H1 (cell line): ENCODE measurements at regions of chr3 and their contacts with region 1.

Region 1: GRCh38 chr3:36993326-36994283 is at the start of gene MLH1:
- DNase-seq: peak; percentile 53 to 95
- H3K4me3 ChIP-seq: peak within 1 kb of the TSS; percentile 58 to 93 (median 90)
- H3K27ac ChIP-seq: peak within 1 kb of the TSS; percentile 96
- H3K4me1 ChIP-seq: peaks cover 0 to 2% (median 0%) of the 10 kb centered on the region in 4 experiments; a peak in 3 of 7 replicates
- H3K27me3 ChIP-seq: no peaks in the 10 kb centered on the region
- CTCF ChIP-seq: no peak
- EP300 ChIP-seq: no peak
- POLR2A ChIP-seq: peak in 1 of 2 experiments; percentile 32; a peak in 2 of 3 replicates
- RAD21 ChIP-seq: no peak
- total RNA-seq, gene MLH1: 47.3 and 51.1 TPM in 2 replicates

Region 2: DNA sequence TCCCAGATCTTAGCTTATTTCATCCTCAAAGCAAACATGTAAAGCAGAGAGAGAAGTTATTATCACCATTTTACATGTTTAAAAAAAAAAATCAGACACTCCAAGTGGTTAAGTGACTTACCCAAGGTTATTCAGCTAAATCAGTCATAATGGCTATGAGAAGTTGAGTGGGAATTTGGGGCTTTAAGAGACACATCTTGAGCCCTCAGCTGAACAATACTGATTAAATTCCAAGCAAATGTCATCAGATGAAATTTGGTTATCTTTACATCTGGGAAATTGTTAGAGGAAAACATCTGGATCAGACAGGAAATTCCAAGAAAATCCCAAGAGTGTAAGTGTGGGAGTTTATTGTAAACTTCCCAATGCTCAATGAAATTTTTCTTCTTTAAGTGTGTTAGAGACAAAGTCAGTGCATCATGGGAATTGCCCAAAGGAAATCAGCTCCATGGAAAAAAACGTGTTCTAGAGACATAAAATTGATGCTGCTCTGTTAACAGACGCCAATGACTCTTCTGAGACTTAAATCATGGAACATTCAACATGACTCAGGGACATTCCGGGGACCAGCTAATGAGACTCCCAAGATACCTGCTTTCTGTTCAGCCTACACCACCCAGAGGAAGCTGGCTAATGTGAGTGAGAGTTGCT is 209.5 kb before region 1 on chr3:
- CTCF ChIA-PET with region 1: no interaction called
- POLR2A ChIA-PET with region 1: no interaction called
- DNase-seq: no peak
- H3K4me3 ChIP-seq: no peak overlapping the region
- H3K27ac ChIP-seq: no peak overlapping the region
- H3K4me1 ChIP-seq: no peaks in the 10 kb centered on the region
- H3K27me3 ChIP-seq: no peaks in the 10 kb centered on the region; a peak in 1 of 7 replicates
- CTCF ChIP-seq: no peak
- EP300 ChIP-seq: no peak
- POLR2A ChIP-seq: no peak
- RAD21 ChIP-seq: no peak

Region 3: GRCh38 chr3:36969540-36970432 is 23.8 kb before region 1 on chr3:
- CTCF ChIA-PET with region 1: interaction called, 3 read pairs
- POLR2A ChIA-PET with region 1: interaction called, 11 read pairs
- DNase-seq: no peak
- H3K4me3 ChIP-seq: no peak overlapping the region
- H3K27ac ChIP-seq: no peak overlapping the region
- H3K4me1 ChIP-seq: peaks cover 0 to 15% (median 8%) of the 10 kb centered on the region in 4 experiments; a peak in 5 of 7 replicates
- H3K27me3 ChIP-seq: no peaks in the 10 kb centered on the region
- CTCF ChIP-seq: no peak
- EP300 ChIP-seq: no peak
- POLR2A ChIP-seq: no peak
- RAD21 ChIP-seq: no peak

Region 4: DNA sequence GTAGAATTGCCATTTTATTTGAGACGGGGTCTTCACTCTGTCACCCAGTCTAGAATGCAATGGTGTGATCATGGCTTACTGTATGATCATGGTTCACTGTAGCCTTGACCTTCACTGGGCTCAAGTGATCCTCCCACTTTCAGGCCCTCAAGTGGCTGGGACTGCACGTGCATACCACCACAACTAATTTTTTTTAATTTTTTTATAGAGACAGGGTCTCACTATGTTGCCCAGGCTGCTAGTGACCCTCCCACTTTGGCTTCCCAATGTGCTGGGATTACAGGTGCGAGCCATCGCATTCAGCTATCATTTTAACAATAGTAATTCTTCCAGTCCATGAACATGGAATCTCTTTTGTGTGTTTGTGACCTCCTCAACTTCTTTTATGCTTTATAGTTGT is 12.6 kb before region 1 on chr3:
- CTCF ChIA-PET with region 1: interaction called, 5 read pairs
- POLR2A ChIA-PET with region 1: interaction called, 18 read pairs
- DNase-seq: no peak
- H3K4me3 ChIP-seq: no peak overlapping the region
- H3K27ac ChIP-seq: no peak overlapping the region
- H3K4me1 ChIP-seq: no peaks in the 10 kb centered on the region
- H3K27me3 ChIP-seq: no peaks in the 10 kb centered on the region
- CTCF ChIP-seq: no peak
- EP300 ChIP-seq: no peak
- POLR2A ChIP-seq: no peak
- RAD21 ChIP-seq: no peak

Region 5: GRCh38 chr3:37031096-37031682 is 37.6 kb after region 1 on chr3:
- CTCF ChIA-PET with region 1: no interaction called
- POLR2A ChIA-PET with region 1: no interaction called
- DNase-seq: no peak
- H3K4me3 ChIP-seq: no peak overlapping the region
- H3K27ac ChIP-seq: no peak overlapping the region
- H3K4me1 ChIP-seq: no peaks in the 10 kb centered on the region
- H3K27me3 ChIP-seq: no peaks in the 10 kb centered on the region
- CTCF ChIP-seq: no peak
- EP300 ChIP-seq: no peak
- POLR2A ChIP-seq: no peak
- RAD21 ChIP-seq: no peak

Region 6: DNA sequence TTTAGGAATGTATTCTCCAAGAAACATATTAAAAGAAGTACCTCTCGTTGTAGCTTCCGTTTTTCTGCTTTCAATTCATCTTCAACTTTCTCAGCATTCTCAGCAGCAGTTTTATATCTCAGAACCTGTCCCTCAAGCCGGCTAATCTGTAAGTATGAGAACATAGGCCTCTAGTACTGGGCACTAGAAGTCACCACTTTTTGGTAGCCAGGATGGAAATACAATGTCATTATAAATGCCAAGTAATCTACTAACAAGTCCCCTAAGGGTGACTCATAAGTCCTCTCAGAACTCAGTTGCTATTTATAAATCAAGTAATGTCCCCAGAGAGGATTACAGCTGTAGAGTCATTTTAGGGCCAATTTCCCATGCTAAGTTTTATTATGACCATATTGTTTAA is 60.8 kb after region 1 on chr3:
- CTCF ChIA-PET with region 1: no interaction called
- POLR2A ChIA-PET with region 1: no interaction called
- DNase-seq: no peak
- H3K4me3 ChIP-seq: no peak overlapping the region
- H3K27ac ChIP-seq: no peak overlapping the region
- H3K4me1 ChIP-seq: no peaks in the 10 kb centered on the region
- H3K27me3 ChIP-seq: no peaks in the 10 kb centered on the region
- CTCF ChIP-seq: no peak
- EP300 ChIP-seq: no peak
- POLR2A ChIP-seq: no peak
- RAD21 ChIP-seq: no peak